ENCODE measurements at regions of chr6 and their contacts with region 1.

Region 1: DNA sequence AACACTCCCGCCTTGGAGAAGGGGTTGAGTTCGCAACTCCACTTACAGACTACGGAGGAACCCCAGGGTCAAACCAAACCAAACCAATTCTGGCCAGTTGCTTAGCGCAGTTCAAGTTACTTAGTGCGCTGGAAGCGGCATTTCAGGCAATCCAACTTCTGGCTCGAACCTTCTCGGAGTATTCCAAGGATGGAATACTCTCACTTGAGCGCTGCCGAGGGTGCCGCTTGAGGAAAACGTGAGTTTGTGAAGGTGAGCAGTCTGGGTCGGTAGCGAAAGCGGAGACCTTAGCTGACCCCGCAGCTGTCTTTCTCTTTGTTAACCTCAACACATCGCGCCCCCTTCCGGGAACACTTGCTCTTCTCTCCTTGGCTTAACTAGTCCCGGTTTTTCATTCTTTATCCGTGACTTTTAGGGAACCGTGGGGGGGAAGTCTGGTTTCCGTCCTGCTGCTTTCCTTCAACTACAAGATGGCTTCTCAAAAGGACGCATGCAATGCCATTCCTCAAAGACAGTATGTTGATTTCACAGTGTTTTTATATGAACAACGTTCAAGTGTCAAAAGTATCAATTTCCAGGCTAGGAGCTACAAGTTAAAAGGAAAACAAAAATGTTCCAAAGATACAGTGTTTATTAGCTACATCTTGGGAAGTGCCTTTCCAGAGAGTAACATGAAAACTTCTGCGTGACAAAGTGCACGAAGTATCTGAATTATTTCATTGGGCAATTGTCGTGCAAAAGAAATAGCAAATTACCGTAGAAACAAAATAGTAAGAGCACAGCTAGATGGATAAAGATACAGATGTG is 742 bp upstream of the PNISR start:
- DNase-seq: peak; percentile 62 to 90 (median 84)
- H3K4me3 ChIP-seq: peak overlapping the region; percentile 64 to 100 (median 89)
- H3K27ac ChIP-seq: peak overlapping the region; percentile 93 to 100 (median 99)
- H3K27me3 ChIP-seq: no peaks in the 10 kb centered on the region
- CTCF ChIP-seq: peak; percentile 18 to 72 (median 56)

Region 2: DNA sequence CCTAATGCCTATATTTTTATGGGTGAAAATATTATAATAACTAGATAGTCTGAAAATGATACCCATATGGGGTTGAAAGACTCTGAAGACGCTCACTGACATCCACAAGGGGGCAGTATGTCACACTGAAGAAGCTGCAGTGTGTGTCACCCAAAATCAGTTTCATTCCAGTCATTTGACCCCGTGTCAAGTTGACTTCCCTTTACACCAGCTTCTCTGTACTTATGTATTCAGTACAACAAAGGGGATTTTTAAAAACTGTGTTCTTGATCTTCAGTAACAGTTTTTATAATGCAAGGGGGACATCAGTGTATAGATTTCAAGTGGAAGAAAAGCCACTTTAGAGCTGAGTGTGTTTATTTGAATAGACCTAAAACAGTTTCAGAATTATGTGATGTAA is 95.7 kb before region 1 on chr6:
- intact Hi-C with region 1: loop called in 1 of 2 experiments (anchors 2 kb)
- DNase-seq: peak in 4 of 10 donors; percentile 19 to 59 (median 40)
- H3K4me3 ChIP-seq: no peak overlapping the region
- H3K27ac ChIP-seq: no peak overlapping the region
- H3K27me3 ChIP-seq: no peaks in the 10 kb centered on the region
- CTCF ChIP-seq: peak; percentile 29 to 84 (median 76)

Region 3: DNA sequence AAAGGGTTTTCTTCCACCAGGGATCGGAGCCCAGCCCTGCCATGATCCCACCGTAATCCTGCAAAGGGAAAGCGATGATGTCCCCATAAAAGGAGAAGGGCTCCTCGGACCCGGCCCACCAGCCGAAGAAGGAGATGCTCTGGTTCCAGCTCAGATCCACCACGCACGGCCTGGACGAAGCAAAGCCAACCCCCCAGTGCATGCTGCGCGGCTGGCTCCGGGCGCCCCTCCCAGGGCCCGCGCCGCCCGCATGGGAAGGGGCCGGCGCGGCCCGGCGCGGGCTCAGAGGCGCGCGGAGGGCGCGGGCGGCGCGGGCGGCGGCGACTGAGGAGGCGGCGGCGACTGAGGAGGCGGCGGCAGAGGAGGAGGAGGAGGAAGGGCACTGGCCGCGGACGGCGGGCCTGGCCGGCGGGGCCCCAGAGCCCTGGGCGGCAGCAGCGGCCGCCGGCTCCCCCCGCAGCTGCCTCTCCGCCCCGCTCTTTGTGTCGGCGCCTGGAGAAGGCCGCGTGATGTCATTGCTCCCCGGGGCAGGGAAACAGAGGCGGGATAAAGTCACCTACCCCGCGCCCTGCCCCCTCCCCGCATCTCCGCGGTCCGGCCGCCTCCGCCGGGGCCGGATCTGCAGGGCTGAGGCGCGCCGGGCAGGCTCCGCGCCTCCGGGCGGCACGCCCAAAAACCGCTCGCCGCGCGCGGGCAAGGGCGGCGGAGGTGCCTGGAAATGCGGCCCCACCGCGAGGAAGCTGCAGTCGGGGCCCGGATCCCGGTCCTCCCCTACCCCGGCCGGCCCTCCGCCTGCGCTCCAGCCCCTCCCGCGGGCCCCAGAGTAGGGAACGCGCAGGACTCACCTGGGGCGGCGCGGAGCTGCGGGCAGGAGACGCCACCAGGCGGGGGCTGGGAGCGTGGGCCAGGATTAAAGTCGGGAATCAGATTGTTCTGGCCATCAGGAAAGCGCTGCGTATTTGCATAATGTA is 76.4 kb before region 1 on chr6 and contains the start of gene FAXC:
- intact Hi-C with region 1: loop called in 1 of 2 experiments (anchors 5 kb)
- DNase-seq: peak in 6 of 10 donors; percentile 39 to 81 (median 60)
- H3K4me3 ChIP-seq: peak within 1 kb of the TSS; percentile 51 to 85 (median 72)
- H3K27ac ChIP-seq: peak within 1 kb of the TSS in 56 of 59 donors; percentile 1 to 92 (median 80)
- H3K27me3 ChIP-seq: peaks cover 0 to 5% (median 0%) of the 10 kb centered on the region in 45 donors
- CTCF ChIP-seq: peak in 14 of 56 donors; percentile 9 to 49 (median 16)
- total RNA-seq, gene FAXC: 15.7 to 98.6 (median 63.3) TPM

Region 4: GRCh38 chr6:99378636-99379035 is 47.2 kb before region 1 on chr6:
- intact Hi-C with region 1: no loop called
- DNase-seq: no peak
- H3K4me3 ChIP-seq: no peak overlapping the region
- H3K27ac ChIP-seq: no peak overlapping the region
- H3K27me3 ChIP-seq: no peaks in the 10 kb centered on the region
- CTCF ChIP-seq: no peak

Region 5: DNA sequence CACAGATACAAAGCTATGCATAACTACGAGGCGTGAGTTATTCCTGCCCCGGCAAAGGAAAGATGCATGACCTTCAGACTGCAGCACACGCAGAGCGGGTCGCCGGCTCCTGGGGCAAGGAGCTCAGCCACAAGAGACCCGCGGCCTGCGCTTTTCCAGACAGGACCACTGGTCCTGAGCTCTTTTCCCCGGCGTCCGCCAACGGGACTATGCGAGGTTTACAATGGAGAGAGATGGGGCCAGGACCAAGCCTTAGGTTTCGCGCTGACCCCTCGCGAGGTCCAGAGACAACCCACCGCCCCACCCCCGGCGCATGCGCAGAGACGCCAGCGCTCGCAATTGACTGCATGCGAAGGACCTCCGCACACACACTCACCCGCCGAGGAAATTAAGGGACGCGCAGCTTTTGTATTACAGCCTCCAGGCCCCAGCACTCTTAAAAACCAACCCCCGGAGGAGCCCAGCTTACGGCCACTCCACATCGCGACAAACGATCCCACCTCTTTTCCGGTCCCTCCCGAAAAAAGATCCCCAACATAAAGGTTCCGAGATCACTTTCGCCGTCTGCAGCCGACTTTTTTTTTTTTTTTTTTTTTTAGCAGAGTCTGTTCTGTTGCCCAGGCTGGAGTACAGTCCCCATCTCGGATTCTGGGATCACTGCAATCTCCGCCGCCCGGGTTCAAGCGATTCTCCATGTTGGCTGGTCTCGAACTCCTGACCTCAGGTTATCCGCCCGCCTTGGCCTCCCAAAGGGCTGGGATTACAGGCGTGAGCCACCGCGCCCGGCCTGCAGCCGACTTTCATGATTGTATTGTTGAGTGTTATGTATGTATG is 31.9 kb before region 1 on chr6 and contains the start of gene COQ3:
- intact Hi-C with region 1: loop called (anchors 2 kb)
- DNase-seq: peak; percentile 58 to 78 (median 69)
- H3K4me3 ChIP-seq: peak within 1 kb of the TSS; percentile 63 to 99 (median 83)
- H3K27ac ChIP-seq: peak within 1 kb of the TSS; percentile 36 to 96 (median 87)
- H3K27me3 ChIP-seq: no peaks in the 10 kb centered on the region
- CTCF ChIP-seq: peak in 14 of 56 donors; percentile 3 to 34 (median 26)
- total RNA-seq, gene COQ3: 3.5 to 21.5 (median 11.5) TPM

Region 6: DNA sequence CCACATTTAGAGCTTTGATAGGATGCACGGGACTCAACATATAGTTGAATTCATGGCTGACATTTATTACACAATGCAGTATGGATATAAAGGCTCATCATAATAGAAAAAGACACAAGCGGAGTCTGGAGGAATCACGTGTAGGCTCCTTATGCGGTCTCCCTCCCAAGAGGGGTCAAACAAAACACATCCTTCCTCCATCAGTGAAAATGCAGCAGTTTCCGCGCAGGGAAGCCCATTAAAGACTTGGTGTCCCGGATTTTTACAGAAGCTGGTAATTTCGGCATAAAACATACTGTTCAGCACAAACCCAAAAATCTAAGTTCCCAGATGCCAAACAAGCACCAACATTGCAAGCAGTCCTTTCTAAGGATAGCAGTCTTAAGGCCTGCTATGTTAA is 88.2 kb after region 1 on chr6:
- intact Hi-C with region 1: loop called in 1 of 2 experiments (anchors 10 kb)
- DNase-seq: no peak
- H3K4me3 ChIP-seq: peak overlapping the region in 58 of 59 donors; percentile 55 to 100 (median 90)
- H3K27ac ChIP-seq: peak overlapping the region in 24 of 59 donors; percentile 2 to 94 (median 88)
- H3K27me3 ChIP-seq: no peaks in the 10 kb centered on the region
- CTCF ChIP-seq: no peak

Region 7: DNA sequence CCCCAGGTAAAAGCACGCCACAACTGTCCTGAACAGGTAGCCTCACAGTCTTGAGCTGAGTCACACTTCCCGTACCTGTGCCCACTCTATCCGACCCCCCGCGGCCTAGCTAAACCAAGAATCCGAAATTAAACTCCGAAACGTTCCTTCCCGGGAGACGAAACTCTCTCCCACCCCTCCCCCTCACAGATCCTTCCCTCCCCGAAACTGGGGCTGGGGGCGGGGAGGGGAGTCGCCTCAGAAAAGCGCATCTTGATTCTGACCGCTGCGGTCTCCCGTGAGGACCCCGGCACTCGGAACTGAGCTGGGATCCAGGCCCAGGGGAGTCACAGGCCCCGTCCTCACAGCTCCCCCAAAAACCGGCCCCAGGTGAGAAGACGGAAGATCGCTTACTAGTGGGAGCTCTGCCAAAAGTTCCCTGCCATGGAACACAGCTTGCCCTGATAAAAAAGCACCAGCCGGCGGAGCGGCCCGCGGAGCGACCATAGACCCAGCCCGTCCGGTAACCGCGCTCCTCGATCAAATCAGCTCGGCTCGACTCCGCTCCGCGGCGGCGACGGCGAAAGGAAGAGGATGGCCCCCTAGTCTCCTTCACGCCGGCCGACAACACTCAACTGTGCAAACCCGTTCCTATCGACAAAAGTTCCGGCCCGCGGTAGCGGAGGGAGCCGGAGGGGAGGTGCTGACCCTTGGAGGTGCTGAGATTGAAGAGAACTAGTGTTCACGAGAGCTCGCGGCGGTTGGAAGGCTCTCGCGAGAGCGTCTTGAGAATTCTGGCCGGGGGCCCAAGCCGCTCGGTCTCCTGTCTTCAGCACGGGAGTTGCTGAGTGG is 142.5 kb after region 1 on chr6 and contains the start of gene CCNC:
- intact Hi-C with region 1: no loop called
- DNase-seq: peak; percentile 67 to 92 (median 88)
- H3K4me3 ChIP-seq: peak within 1 kb of the TSS; percentile 65 to 99 (median 92)
- H3K27ac ChIP-seq: peak within 1 kb of the TSS in 53 of 59 donors; percentile 13 to 90 (median 67)
- H3K27me3 ChIP-seq: no peaks in the 10 kb centered on the region
- CTCF ChIP-seq: peak in 29 of 56 donors; percentile 3 to 52 (median 27)
- total RNA-seq, gene CCNC: 26.4 to 67.5 (median 43.5) TPM

Measured in dorsolateral prefrontal cortex (tissue), 120 donors.